Right cardiac atrium (tissue), 5 donors: ENCODE measurements at regions of chr11 and their contacts with region 1.

Region 1: GRCh38 chr11:56841210-56841810 is 92.8 kb upstream of the OR9G4 start:
- DNase-seq: peak in 2 of 3 donors; percentile 17 to 61
- ATAC-seq: peak; percentile 60 to 64
- H3K4me3 ChIP-seq: no peak overlapping the region
- H3K27ac ChIP-seq: no peak overlapping the region
- H3K4me1 ChIP-seq: no peaks in the 10 kb centered on the region
- H3K27me3 ChIP-seq: no peaks in the 10 kb centered on the region

Region 2: GRCh38 chr11:56817661-56818060 is 23.6 kb before region 1 on chr11:
- intact Hi-C with region 1: no loop called
- DNase-seq: no peak
- ATAC-seq: no peak
- H3K4me3 ChIP-seq: no peak overlapping the region
- H3K27ac ChIP-seq: no peak overlapping the region
- H3K4me1 ChIP-seq: no peaks in the 10 kb centered on the region
- H3K27me3 ChIP-seq: no peaks in the 10 kb centered on the region

Region 3: GRCh38 chr11:57116654-57117053 is 275.3 kb after region 1 on chr11:
- intact Hi-C with region 1: loop called in 1 of 4 experiments (anchors 10 kb)
- DNase-seq: peak in 1 of 3 donors; percentile 68
- ATAC-seq: peak; percentile 36 to 56
- H3K4me3 ChIP-seq: no peak overlapping the region
- H3K27ac ChIP-seq: no peak overlapping the region
- H3K4me1 ChIP-seq: no peaks in the 10 kb centered on the region
- H3K27me3 ChIP-seq: no peaks in the 10 kb centered on the region

Region 4: GRCh38 chr11:57131080-57131790 is 289.9 kb after region 1 on chr11:
- intact Hi-C with region 1: loop called in 1 of 4 experiments (anchors 5 kb)
- DNase-seq: peak; percentile 27 to 63 (median 63)
- ATAC-seq: peak; percentile 77
- H3K4me3 ChIP-seq: no peak overlapping the region
- H3K27ac ChIP-seq: no peak overlapping the region
- H3K4me1 ChIP-seq: no peaks in the 10 kb centered on the region
- H3K27me3 ChIP-seq: no peaks in the 10 kb centered on the region

Region 5: GRCh38 chr11:57417056-57417455 is 575.7 kb after region 1 on chr11:
- intact Hi-C with region 1: no loop called
- DNase-seq: peak in 2 of 3 donors; percentile 58 to 76
- ATAC-seq: peak in 1 of 2 donors; percentile 53
- H3K4me3 ChIP-seq: no peak overlapping the region
- H3K27ac ChIP-seq: no peak overlapping the region
- H3K4me1 ChIP-seq: no peaks in the 10 kb centered on the region
- H3K27me3 ChIP-seq: no peaks in the 10 kb centered on the region